ENCODE measurements at regions of chr13 and their contacts with region 1.

Region 1: DNA sequence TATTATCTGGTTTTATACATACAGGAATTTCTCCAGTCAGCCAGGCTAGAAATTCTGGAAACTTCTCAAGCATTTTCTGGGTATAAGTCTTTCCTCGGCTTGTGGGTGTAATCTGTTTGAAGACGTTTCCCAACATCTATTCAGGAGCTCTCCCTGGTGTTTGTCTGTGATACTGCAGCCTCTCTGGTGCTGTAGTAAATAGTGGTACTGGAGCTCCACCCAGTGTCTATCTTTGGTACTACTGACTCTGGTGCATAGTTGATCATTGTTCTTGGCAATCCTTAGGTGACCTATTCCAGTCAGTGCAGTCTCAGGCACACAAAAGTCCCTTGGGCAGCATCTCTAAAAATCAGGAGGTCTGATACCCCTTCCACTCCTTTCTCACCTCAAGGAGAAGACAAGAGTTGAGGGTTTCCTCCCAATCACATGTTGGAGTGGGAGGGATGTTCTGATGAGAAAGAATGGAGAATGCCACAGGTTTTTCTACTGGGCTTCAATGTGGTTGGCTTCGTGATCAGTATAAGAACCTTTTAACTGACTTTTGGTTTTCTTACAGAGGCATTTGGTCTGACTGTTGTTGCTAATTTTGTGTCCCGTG is 115.5 kb downstream of the CYSLTR2 start:
- DNase-seq: peak; percentile 70
- H3K4me3 Mint-ChIP-seq: no peak overlapping the region
- H3K27ac Mint-ChIP-seq: no peak overlapping the region
- H3K4me1 Mint-ChIP-seq: peaks cover 7% of the 10 kb centered on the region
- H3K27me3 Mint-ChIP-seq: peaks cover 34% of the 10 kb centered on the region

Region 2: GRCh38 chr13:48037346-48038173 is 731.6 kb before region 1 on chr13 and contains the start of gene NUDT15:
- intact Hi-C with region 1: loop called (anchors 5 kb)
- DNase-seq: peak; percentile 96
- H3K4me3 Mint-ChIP-seq: peak within 1 kb of the TSS; percentile 98
- H3K27ac Mint-ChIP-seq: peak within 1 kb of the TSS; percentile 99
- H3K4me1 Mint-ChIP-seq: peaks cover 40% of the 10 kb centered on the region
- H3K27me3 Mint-ChIP-seq: no peaks in the 10 kb centered on the region
- total RNA-seq, gene NUDT15: 12.2 and 15.9 TPM in 2 replicates

Region 3: GRCh38 chr13:48334534-48335127 is 434.6 kb before region 1 on chr13:
- intact Hi-C with region 1: loop called (anchors 2 kb)
- DNase-seq: no peak
- H3K4me3 Mint-ChIP-seq: no peak overlapping the region
- H3K27ac Mint-ChIP-seq: no peak overlapping the region
- H3K4me1 Mint-ChIP-seq: peaks cover 20% of the 10 kb centered on the region
- H3K27me3 Mint-ChIP-seq: peaks cover 2% of the 10 kb centered on the region

Region 4: DNA sequence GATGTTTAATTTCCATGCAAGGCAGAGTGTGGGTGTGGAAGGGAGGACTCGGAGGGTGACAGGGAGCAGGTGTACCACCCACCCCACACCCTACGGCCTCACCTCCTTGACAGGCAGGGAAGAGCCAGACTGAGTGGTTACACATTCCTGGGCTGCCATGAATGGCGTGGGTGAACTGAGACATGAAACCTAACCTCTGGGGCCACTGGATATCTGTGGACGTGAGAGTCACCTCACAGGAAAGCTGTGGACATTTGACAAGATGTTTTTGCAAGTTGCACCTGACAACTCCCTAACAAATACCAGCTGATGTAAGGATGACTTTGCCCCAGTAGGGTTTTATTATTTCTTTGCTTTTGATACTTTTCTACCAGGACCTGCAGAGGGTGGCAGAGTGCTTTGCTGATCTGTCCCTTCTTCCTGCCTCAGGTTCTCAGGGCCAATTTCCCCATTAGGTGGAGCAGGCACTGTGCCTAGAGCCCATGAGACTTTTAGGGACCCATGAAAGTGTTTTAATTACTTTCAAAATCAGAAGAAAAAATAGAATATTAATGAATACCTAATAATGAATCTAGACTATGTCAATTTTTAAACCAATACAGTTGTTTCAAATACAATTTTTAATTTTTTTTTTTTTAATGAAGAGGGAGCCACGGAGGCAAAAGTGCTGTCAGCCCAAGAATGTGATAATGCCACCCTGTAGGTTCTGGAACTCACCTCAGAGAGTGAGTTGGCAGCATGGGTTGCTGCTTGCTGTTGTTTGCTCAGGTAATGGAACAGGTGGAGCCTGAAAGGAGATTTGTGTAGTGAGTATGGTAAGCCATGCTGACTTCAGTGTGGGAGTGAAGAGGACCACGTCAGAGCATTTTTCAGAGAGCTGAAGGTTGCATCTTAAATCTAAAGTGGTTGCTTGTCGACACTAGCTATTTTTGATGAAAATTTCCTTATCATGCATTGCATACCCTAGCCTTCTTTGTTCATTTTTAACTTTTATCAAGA is 173.5 kb before region 1 on chr13:
- intact Hi-C with region 1: loop called (anchors 1 kb)
- DNase-seq: peak; percentile 32
- H3K4me3 Mint-ChIP-seq: no peak overlapping the region
- H3K27ac Mint-ChIP-seq: no peak overlapping the region
- H3K4me1 Mint-ChIP-seq: peaks cover 3% of the 10 kb centered on the region
- H3K27me3 Mint-ChIP-seq: peaks cover 5% of the 10 kb centered on the region

Region 5: DNA sequence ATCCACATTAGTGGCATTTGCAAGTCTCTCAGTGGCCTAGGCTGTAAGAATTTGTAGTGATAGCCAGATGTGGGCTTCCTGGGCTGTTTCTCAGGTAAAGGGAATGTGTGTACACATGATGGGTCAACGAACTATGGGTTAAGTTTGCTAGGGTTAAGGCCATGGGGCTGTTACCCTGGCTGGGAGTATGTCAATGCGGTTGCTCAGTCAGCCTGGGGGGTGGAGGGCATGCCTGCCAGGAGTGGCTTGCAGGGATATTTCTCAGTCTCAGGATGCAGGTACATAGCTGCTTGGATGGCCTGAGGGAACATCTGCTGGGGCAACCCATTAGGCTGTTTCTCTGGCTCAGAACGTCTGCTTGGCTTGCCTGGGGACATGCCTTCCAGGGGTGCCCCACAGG is 102.0 kb before region 1 on chr13:
- intact Hi-C with region 1: no loop called
- DNase-seq: no peak
- H3K4me3 Mint-ChIP-seq: no peak overlapping the region
- H3K27ac Mint-ChIP-seq: no peak overlapping the region
- H3K4me1 Mint-ChIP-seq: no peaks in the 10 kb centered on the region
- H3K27me3 Mint-ChIP-seq: no peaks in the 10 kb centered on the region

Region 6: GRCh38 chr13:48731957-48732569 is 37.1 kb before region 1 on chr13:
- intact Hi-C with region 1: loop called (anchors 1 kb)
- DNase-seq: peak; percentile 43
- H3K4me3 Mint-ChIP-seq: peak overlapping the region; percentile 65
- H3K27ac Mint-ChIP-seq: no peak overlapping the region
- H3K4me1 Mint-ChIP-seq: peaks cover 6% of the 10 kb centered on the region
- H3K27me3 Mint-ChIP-seq: peaks cover 9% of the 10 kb centered on the region